ENCODE measurements at regions of chr7 and their contacts with region 1.

Region 1: DNA sequence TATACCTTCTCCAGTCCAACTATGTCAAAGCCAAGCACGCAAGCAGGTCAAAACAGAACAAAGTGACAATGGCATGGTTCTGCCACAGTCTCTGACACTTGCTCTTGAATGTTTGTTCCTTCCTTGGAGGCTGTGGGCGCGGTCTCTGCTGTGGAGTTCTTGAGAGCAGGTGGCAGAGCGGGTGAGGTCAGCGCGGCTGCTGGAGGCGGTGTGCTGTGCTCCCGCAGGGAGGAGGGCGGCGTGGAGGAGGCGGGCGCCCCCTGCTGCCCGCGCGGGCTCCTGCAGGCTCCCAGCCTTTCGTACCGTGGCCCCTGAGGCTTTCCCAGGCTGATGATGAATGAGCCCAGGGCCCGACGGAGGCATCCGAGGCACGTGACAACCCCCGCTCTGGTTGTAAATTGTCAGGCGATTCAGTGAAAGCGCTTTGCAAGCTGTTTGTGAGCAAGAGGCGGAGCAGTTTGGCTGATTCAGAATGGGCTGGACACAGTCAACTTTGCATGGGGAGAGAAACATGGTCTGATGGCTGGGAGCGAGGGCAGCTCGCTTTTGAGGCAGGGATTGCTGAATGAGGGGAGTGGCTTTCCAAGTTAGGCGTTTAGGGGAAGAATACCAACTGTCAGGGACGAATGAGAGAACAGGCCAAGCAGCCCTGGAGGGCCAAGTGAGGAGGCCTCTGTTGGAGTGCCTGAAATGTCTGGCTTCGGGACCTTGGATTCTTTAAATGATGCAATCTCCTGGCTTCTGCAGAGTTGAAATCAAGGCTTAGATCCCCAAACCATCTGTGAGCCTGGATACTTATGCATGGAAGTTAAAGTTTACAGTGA is 46.6 kb downstream of the CDHR3 start:
- DNase-seq: peak; percentile 70 to 91 (median 78)
- ATAC-seq: peak; percentile 97
- H3K4me3 ChIP-seq: no peak overlapping the region
- H3K4me3 Mint-ChIP-seq: peak overlapping the region; percentile 16
- H3K27ac ChIP-seq: no peak overlapping the region
- H3K27ac Mint-ChIP-seq: peak overlapping the region; percentile 38
- H3K4me1 ChIP-seq: peaks cover 21% of the 10 kb centered on the region
- H3K4me1 Mint-ChIP-seq: peaks cover 51% of the 10 kb centered on the region
- H3K27me3 ChIP-seq: no peaks in the 10 kb centered on the region
- H3K27me3 Mint-ChIP-seq: no peaks in the 10 kb centered on the region
- CTCF ChIP-seq: peak; percentile 99

Region 2: DNA sequence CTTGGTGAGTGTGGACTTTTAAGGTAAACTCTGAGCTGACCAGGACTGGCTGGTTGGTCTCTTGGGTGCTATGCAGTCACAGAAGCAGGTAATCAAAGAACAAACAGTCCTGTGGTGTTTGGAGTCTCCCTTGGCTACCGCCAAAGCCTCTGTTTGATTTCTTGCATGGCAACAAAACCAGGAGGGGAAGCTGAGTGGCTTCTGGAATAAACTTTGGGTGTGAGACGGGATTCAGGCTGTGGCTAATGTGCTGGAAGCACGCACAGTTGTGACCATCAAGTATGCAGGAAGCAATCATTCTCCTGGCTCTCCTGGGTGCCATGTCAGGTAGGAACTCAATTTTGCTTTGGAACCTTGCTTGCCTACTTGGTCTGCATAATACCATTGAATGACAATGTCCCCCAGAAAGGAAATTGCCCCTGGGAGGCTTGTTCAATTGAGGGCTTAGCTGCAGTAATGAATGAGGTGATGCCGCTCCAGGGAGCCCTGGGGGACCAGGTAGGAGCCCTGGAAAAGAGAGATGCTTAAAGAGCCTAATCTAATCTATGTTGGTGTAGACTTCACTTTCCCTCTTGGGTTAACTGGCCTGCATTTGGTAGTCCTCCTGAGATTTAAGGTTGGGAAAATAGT is 46.5 kb before region 1 on chr7 and contains the start of gene CDHR3:
- CTCF ChIA-PET with region 1: no interaction called
- POLR2A ChIA-PET with region 1: no interaction called
- intact Hi-C with region 1: loop called in 1 of 2 experiments (anchors 5 kb)
- DNase-seq: no peak
- ATAC-seq: no peak
- H3K4me3 ChIP-seq: no peak within 1 kb of the TSS
- H3K4me3 Mint-ChIP-seq: no peak within 1 kb of the TSS
- H3K27ac ChIP-seq: no peak within 1 kb of the TSS
- H3K27ac Mint-ChIP-seq: no peak within 1 kb of the TSS
- H3K4me1 ChIP-seq: no peaks in the 10 kb centered on the region
- H3K4me1 Mint-ChIP-seq: no peaks in the 10 kb centered on the region
- H3K27me3 ChIP-seq: no peaks in the 10 kb centered on the region
- H3K27me3 Mint-ChIP-seq: no peaks in the 10 kb centered on the region
- CTCF ChIP-seq: no peak
- total RNA-seq, gene CDHR3: 10.3 to 12.2 TPM

Measured in CD4-positive, alpha-beta T cell (primary cell).